Heart left ventricle (tissue), 16 donors: ENCODE measurements at regions of chr4 and their contacts with region 1.

Region 1: DNA sequence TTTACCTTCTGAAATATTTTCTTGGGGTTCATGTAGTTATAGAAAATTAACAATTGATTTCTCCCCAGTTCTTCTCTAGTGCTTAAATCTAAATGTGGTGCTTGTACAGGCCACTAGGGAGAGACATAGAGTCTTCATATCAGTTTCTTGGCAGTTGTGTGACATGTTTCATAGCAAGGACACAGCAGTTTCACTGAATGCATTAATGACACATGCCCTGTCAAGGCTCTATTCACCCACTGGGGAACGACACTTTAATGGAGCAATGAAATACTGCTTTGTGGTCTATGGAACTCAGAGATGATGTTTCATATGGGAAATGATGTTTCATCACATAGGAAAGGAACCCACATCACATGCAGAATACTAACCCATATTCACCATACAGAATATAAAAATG is 2.8 kb downstream of the VEGFC start:
- DNase-seq: peak in 1 of 5 donors; percentile 11
- ATAC-seq: peak; percentile 23 to 50 (median 48)
- H3K4me3 ChIP-seq: peak overlapping the region in 10 of 12 donors; percentile 65 to 87 (median 75)
- H3K27ac ChIP-seq: peak overlapping the region in 5 of 12 donors; percentile 57 to 91 (median 88)
- H3K4me1 ChIP-seq: peaks cover 0 to 18% (median 0%) of the 10 kb centered on the region in 12 donors
- H3K27me3 ChIP-seq: peaks cover 0 to 32% (median 0%) of the 10 kb centered on the region in 9 donors
- CTCF ChIP-seq: peak; percentile 36 to 75 (median 62)
- POLR2A ChIP-seq: no peak

Region 2: GRCh38 chr4:176383273-176384077 is 406.5 kb before region 1 on chr4:
- intact Hi-C with region 1: loop called in 9 of 10 experiments (anchors 2 to 10 kb)
- DNase-seq: peak in 2 of 5 donors; percentile 11 to 21
- ATAC-seq: peak in 3 of 4 donors; percentile 12 to 74 (median 32)
- H3K4me3 ChIP-seq: peak overlapping the region in 6 of 12 donors; percentile 4 to 33 (median 10)
- H3K27ac ChIP-seq: peak overlapping the region in 10 of 12 donors; percentile 12 to 81 (median 56)
- H3K4me1 ChIP-seq: peaks cover 0 to 21% (median 0%) of the 10 kb centered on the region in 12 donors
- H3K27me3 ChIP-seq: no peaks in the 10 kb centered on the region
- CTCF ChIP-seq: no peak
- POLR2A ChIP-seq: no peak

Region 3: DNA sequence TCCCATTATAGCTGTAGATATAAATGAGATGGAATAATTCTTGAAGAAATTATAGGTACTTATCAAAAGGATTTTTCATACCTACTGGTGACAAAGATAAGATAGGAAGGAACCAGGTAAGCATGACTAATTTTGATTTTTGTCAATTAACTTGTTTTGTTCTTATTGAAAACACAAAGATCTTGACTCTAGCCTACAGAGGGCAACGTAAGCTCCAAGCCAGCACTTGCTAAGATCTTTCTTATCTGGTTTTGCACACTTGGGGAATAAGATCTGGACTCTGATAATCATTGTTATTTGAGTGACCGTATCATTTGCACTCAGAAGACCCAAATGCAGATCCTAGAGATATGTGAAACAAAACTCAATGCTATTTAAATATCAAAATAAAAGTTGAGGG is 220.7 kb before region 1 on chr4:
- intact Hi-C with region 1: loop called in 6 of 10 experiments (anchors 2 to 10 kb)
- DNase-seq: no peak
- ATAC-seq: peak in 1 of 4 donors; percentile 39
- H3K4me3 ChIP-seq: no peak overlapping the region
- H3K27ac ChIP-seq: no peak overlapping the region
- H3K4me1 ChIP-seq: no peaks in the 10 kb centered on the region
- H3K27me3 ChIP-seq: no peaks in the 10 kb centered on the region
- CTCF ChIP-seq: peak in 1 of 12 donors; percentile 19
- POLR2A ChIP-seq: no peak

Region 4: GRCh38 chr4:176838611-176839433 is 48.9 kb after region 1 on chr4:
- intact Hi-C with region 1: loop called in 1 of 10 experiments (anchors 5 kb)
- DNase-seq: peak in 4 of 5 donors; percentile 28 to 63 (median 40)
- ATAC-seq: peak in 2 of 4 donors; percentile 70 to 78
- H3K4me3 ChIP-seq: no peak overlapping the region
- H3K27ac ChIP-seq: peak overlapping the region in 10 of 12 donors; percentile 11 to 74 (median 52)
- H3K4me1 ChIP-seq: peaks cover 0 to 5% (median 0%) of the 10 kb centered on the region in 12 donors
- H3K27me3 ChIP-seq: no peaks in the 10 kb centered on the region
- CTCF ChIP-seq: no peak
- POLR2A ChIP-seq: no peak

Region 5: DNA sequence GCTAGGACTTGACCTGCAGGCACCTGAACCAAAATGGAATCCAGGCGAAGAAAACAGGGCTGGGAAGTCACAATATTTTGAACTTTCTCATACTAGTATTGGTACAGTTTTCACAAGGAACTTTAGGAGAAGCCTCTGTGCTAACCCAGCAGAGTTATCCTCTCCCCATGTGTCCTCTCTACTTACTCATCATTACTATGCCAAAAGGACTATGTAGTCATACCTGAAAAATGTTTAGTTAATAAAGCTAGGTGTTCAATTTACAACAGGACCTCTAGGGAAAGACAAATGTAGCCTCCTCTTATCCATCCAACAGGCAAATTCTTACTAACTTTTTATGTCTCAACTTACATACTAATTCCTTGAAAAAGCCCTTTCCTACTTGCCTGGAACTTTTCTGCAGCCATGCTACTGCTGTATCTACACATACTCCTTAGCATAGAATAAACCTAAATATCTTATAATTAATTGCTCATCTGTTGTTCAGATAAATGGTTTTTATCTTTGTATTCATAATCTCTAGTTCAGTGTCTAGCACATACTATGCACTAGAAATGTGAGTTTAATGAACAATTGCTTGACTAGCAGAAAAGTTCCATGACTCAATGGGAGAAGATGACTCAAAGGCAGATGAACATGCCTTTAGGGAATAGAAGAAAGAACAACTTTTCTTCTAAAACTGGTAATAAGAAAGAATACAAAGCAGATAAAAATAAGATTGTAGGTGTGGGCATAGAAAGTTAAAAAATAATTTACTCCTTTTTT is 218.3 kb after region 1 on chr4:
- intact Hi-C with region 1: no loop called
- DNase-seq: no peak
- ATAC-seq: no peak
- H3K4me3 ChIP-seq: no peak overlapping the region
- H3K27ac ChIP-seq: no peak overlapping the region
- H3K4me1 ChIP-seq: no peaks in the 10 kb centered on the region
- H3K27me3 ChIP-seq: no peaks in the 10 kb centered on the region
- CTCF ChIP-seq: no peak
- POLR2A ChIP-seq: no peak